ENCODE measurements at regions of chr17 and their contacts with region 1.

Region 1: GRCh38 chr17:75199886-75200618 is 5.4 kb upstream of the NUP85 start:
- DNase-seq: no peak
- ATAC-seq: no peak
- H3K4me3 Mint-ChIP-seq: no peak overlapping the region
- H3K27ac Mint-ChIP-seq: no peak overlapping the region
- H3K4me1 Mint-ChIP-seq: peaks cover 8% of the 10 kb centered on the region
- H3K27me3 Mint-ChIP-seq: no peaks in the 10 kb centered on the region

Region 2: GRCh38 chr17:75069783-75070182 is 130.3 kb before region 1 on chr17:
- CTCF ChIA-PET with region 1: interaction called, 4 read pairs
- POLR2A ChIA-PET with region 1: no interaction called
- intact Hi-C with region 1: loop called in 1 of 2 experiments (anchors 5 kb)
- DNase-seq: peak; percentile 31
- ATAC-seq: no peak
- H3K4me3 Mint-ChIP-seq: no peak overlapping the region
- H3K27ac Mint-ChIP-seq: no peak overlapping the region
- H3K4me1 Mint-ChIP-seq: peaks cover 34% of the 10 kb centered on the region
- H3K27me3 Mint-ChIP-seq: no peaks in the 10 kb centered on the region

Region 3: DNA sequence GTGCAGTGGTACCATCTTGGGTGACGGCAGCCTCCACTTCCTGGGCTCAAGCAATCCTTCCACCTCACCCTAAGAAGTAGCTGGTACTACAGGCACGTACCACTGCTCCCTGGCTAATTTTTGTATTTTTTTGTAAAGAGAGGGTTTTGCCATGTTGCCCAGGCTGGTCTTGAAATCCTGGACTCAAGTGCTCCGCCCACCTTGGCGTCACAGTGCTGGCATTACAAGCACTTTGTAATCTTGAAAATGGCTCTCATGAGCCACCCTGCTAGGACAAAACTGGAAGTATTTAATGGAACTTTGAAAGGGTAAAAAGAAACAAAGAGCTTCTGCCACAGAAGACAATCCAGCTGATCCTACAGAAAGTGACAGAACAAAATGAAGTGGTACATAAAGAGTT is 26.5 kb before region 1 on chr17:
- CTCF ChIA-PET with region 1: interaction called, 61 read pairs
- POLR2A ChIA-PET with region 1: interaction called, 3 read pairs
- intact Hi-C with region 1: loop called in 1 of 2 experiments (anchors 1 kb)
- DNase-seq: no peak
- ATAC-seq: no peak
- H3K4me3 Mint-ChIP-seq: no peak overlapping the region
- H3K27ac Mint-ChIP-seq: no peak overlapping the region
- H3K4me1 Mint-ChIP-seq: peaks cover 14% of the 10 kb centered on the region
- H3K27me3 Mint-ChIP-seq: no peaks in the 10 kb centered on the region

Measured in activated CD4-positive, alpha-beta T cell treated with anti-CD3 and anti-CD28 coated beads for 36 hours (primary cell).